Tibial artery (tissue), 4 donors: ENCODE measurements at regions of chr5 and their contacts with region 1.

Region 1: DNA sequence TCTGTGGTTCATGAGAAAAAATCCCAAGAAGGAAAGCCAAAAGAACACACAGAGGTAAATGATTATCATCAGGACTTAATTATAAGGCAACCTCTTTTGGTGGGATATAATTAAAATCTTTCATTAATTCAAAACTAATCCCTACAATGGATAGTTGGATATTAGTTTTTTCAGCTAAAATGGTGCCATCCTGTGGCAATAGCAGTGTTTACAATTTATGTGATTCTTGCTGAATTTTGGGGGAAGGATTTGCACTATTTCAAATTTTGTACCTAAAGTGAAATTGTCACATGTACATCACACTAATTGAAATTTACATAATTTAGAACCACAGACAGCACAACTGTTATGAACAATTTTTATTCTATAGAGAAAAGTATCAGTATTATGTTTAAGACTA is 67.0 kb downstream of the CAST start:
- DNase-seq: no peak
- H3K4me3 ChIP-seq: no peak overlapping the region
- H3K27ac ChIP-seq: no peak overlapping the region
- H3K4me1 ChIP-seq: peaks cover 0 to 4% (median 3%) of the 10 kb centered on the region in 4 donors
- H3K27me3 ChIP-seq: no peaks in the 10 kb centered on the region
- CTCF ChIP-seq: peak in 1 of 2 experiments; percentile 31

Region 2: GRCh38 chr5:96614110-96614691 is 115.0 kb before region 1 on chr5:
- intact Hi-C with region 1: loop called (anchors 10 kb)
- DNase-seq: peak in 1 of 2 donors; percentile 63
- H3K4me3 ChIP-seq: no peak overlapping the region
- H3K27ac ChIP-seq: peak overlapping the region; percentile 35 to 57
- H3K4me1 ChIP-seq: peaks cover 0 to 17% (median 9%) of the 10 kb centered on the region in 4 donors
- H3K27me3 ChIP-seq: no peaks in the 10 kb centered on the region
- CTCF ChIP-seq: peak; percentile 44 to 64